ENCODE measurements at regions of chr1 and their contacts with region 1.

Region 1: DNA sequence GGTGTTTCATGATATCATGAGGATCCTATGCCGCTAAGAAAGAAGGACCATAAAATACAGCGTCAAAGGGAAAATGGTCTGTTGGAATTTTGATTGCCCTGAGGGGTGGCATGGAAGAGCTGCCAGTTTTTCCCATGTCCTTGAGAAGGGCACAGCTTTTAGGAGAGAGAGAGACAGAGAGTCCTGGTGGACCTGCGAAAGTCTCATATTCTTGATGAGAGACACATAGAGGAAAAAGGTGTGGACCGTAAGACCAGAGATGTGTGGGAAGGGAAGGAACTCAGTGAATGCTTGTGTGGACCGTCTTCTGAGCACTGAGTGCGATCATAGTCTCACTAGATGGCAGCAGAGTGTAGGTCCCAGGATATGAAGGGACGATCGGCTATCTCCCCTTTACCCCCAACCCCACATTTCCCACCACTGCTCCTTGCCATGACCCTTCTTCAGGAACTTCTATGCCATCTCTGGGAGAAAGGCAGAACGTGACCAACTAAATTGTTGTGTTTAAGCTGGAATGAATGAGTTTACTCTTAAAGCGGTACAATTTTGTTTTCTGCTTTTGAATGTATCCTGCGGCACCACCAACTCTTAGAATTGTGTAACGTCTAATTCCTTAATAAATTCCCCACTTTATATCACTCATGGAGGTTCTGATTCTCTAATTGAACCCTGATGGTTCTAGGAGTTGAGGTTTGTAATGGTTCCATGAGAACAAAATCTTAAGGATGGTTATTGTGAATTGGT is 117.7 kb downstream of the CTH start:
- DNase-seq: peak; percentile 30
- H3K4me3 Mint-ChIP-seq: no peak overlapping the region
- H3K27ac Mint-ChIP-seq: no peak overlapping the region
- H3K4me1 Mint-ChIP-seq: peaks cover 8% of the 10 kb centered on the region
- H3K27me3 Mint-ChIP-seq: peaks cover 14% of the 10 kb centered on the region
- CTCF ChIP-seq: peak; percentile 54

Region 2: DNA sequence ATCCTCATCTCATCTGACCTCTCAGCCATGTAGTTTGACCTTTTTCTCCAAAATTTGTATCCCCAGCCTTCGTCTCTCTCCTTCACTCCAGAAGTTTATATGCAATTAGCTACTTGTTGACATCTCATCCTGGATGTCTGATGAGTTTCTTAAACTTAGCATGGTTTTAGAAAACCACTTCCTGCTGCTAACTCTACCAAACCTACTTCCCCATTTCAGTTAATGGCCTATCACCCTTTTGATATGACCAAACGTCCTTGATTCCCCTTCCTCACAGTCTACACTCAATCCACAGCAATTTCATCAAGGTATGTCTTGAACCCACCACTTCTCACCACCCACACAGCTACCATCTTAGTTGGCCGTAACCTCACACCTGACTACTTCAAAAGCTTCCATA is 445.2 kb before region 1 on chr1:
- CTCF ChIA-PET with region 1: no interaction called
- intact Hi-C with region 1: no loop called
- DNase-seq: no peak
- H3K4me3 Mint-ChIP-seq: no peak overlapping the region
- H3K27ac Mint-ChIP-seq: no peak overlapping the region
- H3K4me1 Mint-ChIP-seq: no peaks in the 10 kb centered on the region
- H3K27me3 Mint-ChIP-seq: no peaks in the 10 kb centered on the region
- CTCF ChIP-seq: no peak

Region 3: DNA sequence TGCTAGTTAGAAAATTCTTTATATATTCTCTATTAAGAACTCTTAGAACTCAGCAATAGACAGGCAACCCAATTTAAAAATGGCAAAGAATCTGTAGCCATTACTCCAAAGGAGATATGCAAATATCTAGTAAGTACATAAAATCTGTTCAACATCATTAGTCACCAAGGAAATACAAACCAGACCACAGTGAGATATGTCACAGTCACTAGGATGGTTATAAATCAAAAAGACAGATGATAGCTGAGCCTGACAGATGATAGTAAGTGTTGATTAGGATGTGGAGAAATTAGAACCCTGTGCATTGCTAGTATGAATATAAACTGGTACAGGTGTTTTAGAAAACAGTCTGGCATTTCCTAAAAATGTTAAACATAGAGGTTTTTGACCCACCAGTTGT is 281.0 kb before region 1 on chr1:
- CTCF ChIA-PET with region 1: no interaction called
- intact Hi-C with region 1: no loop called
- DNase-seq: no peak
- H3K4me3 Mint-ChIP-seq: no peak overlapping the region
- H3K27ac Mint-ChIP-seq: no peak overlapping the region
- H3K4me1 Mint-ChIP-seq: no peaks in the 10 kb centered on the region
- H3K27me3 Mint-ChIP-seq: no peaks in the 10 kb centered on the region
- CTCF ChIP-seq: no peak

Region 4: GRCh38 chr1:70458131-70458530 is 70.6 kb before region 1 on chr1:
- CTCF ChIA-PET with region 1: no interaction called
- intact Hi-C with region 1: no loop called
- DNase-seq: no peak
- H3K4me3 Mint-ChIP-seq: no peak overlapping the region
- H3K27ac Mint-ChIP-seq: no peak overlapping the region
- H3K4me1 Mint-ChIP-seq: no peaks in the 10 kb centered on the region
- H3K27me3 Mint-ChIP-seq: no peaks in the 10 kb centered on the region
- CTCF ChIP-seq: no peak

Region 5: DNA sequence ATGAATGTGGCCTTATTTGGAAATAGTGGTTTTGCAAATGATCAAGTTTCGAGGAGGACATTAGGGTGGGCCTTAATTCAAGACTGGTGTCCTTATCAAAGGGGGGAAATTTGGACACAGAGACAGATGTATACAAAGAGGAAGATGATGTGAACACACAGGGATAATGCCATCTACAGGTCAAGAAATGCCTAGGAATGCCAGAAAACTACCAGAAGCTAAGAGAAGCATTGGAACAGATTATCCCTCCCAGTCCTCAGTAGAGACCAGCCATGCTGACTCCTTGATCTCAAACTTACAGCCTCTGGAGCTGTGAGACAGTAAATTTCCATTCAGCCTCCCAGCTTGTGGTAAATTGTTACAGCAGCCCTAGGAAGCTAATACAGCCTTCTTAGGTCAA is 367.5 kb after region 1 on chr1:
- CTCF ChIA-PET with region 1: no interaction called
- intact Hi-C with region 1: loop called (anchors 10 kb)
- DNase-seq: no peak
- H3K4me3 Mint-ChIP-seq: no peak overlapping the region
- H3K27ac Mint-ChIP-seq: no peak overlapping the region
- H3K4me1 Mint-ChIP-seq: no peaks in the 10 kb centered on the region
- H3K27me3 Mint-ChIP-seq: no peaks in the 10 kb centered on the region
- CTCF ChIP-seq: no peak